Activated T-helper 1 cell treated with anti-CD3 and anti-CD28 coated beads, Interleukin-12 subunit alpha, Interleukin-12 subunit beta, Interleukin-2, Interleukin-4 antibody, amounts not matched to agents 30 ng/mL and 10 ng/mL and 1 ng/mL, durations not matched to agents 14 hours and 24 hours and 36 hours (primary cell): ENCODE measurements at regions of chr22 and their contacts with region 1.

Region 1: DNA sequence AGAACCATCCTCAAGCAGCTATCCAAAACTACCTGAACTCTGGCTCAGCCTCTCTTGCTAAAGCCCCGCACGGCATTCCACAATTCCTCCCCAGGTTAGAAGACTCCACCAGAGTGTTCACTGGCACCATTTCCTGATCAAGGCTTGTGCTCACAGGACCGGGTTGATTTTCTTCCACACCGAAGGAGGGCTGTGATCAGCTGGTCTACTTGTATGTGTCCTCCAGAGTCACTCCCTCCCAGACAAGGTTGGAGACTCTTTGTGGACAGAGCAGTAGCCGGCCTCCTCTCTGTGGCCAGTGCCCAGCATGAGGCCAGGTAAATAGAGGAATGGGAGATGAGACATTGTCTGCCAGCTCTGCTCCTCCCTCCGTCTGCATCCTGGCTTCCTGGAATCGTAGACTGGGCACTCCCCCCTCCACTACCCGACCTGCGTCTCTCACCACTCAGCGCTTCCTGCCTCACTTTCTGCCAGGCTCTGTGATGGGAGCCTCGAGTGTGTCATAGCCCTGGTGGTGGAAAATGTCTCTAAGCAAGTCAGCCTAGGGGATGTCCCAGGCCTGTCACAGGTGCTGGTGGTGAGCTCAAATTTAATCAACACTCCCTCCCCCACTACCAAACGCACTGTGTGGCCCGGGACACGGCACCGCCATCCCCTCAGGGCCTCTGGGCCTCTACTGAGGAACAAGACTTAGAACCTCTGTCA is 12.5 kb upstream of the TMPRSS6 start:
- DNase-seq: peak; percentile 93
- H3K4me3 Mint-ChIP-seq: peak overlapping the region; percentile 86
- H3K27ac Mint-ChIP-seq: peak overlapping the region; percentile 100
- H3K4me1 Mint-ChIP-seq: peaks cover 85% of the 10 kb centered on the region
- H3K27me3 Mint-ChIP-seq: peaks cover 2% of the 10 kb centered on the region

Region 2: GRCh38 chr22:37077884-37078485 is 44.1 kb before region 1 on chr22:
- intact Hi-C with region 1: loop called (anchors 1 kb)
- DNase-seq: peak; percentile 79
- H3K4me3 Mint-ChIP-seq: peak overlapping the region; percentile 49
- H3K27ac Mint-ChIP-seq: peak overlapping the region; percentile 95
- H3K4me1 Mint-ChIP-seq: peaks cover 53% of the 10 kb centered on the region
- H3K27me3 Mint-ChIP-seq: peaks cover 3% of the 10 kb centered on the region

Region 3: DNA sequence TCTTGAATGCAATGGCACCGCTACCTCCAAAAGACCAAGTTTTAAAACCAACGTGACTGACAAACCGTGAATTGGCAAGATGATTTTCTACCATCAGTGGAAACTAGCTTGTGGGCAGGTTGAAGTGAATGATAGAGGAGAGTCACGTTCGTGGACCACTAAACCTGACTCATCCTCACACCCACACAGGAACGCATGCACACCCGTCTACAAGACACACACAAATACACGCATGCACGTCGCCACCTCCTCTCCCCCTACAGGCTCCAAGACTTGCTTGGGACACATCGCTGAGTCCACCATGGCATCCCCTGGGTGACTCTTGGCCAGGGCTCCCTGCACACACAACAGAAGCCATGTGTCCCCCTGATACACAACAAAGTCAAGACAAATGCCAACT is 26.9 kb before region 1 on chr22:
- intact Hi-C with region 1: loop called (anchors 1 kb)
- DNase-seq: no peak
- H3K4me3 Mint-ChIP-seq: no peak overlapping the region
- H3K27ac Mint-ChIP-seq: peak overlapping the region; percentile 80
- H3K4me1 Mint-ChIP-seq: peaks cover 38% of the 10 kb centered on the region
- H3K27me3 Mint-ChIP-seq: peaks cover 3% of the 10 kb centered on the region

Region 4: DNA sequence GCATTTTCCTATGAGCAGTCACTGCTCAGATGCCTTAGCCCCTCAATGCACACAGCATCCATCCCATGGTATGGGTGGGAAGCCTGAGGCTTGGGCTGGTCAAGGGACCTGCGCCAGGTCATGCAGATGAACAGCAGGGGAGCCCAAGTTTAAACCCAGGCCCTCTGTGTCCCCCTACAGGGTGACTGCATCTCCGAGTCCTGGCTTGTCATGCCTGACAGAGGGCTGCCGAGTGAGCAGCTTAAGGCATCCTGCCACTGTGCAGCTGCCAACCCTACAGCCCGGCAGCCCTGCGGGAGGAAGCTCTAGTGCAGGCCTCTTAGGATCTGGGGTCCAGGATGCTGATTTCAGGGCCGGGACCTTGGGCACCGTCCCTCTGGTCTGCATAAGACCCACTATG is 17.7 kb after region 1 on chr22:
- intact Hi-C with region 1: loop called (anchors 2 kb)
- DNase-seq: no peak
- H3K4me3 Mint-ChIP-seq: peak overlapping the region; percentile 9
- H3K27ac Mint-ChIP-seq: peak overlapping the region; percentile 91
- H3K4me1 Mint-ChIP-seq: peaks cover 54% of the 10 kb centered on the region
- H3K27me3 Mint-ChIP-seq: no peaks in the 10 kb centered on the region

Region 5: GRCh38 chr22:37148742-37149665 is 27.0 kb after region 1 on chr22:
- intact Hi-C with region 1: loop called (anchors 1 kb)
- DNase-seq: no peak
- H3K4me3 Mint-ChIP-seq: peak overlapping the region; percentile 92
- H3K27ac Mint-ChIP-seq: peak overlapping the region; percentile 93
- H3K4me1 Mint-ChIP-seq: peaks cover 72% of the 10 kb centered on the region
- H3K27me3 Mint-ChIP-seq: no peaks in the 10 kb centered on the region

Region 6: GRCh38 chr22:37896181-37896592 is 774.1 kb after region 1 on chr22:
- intact Hi-C with region 1: no loop called
- DNase-seq: peak; percentile 52
- H3K4me3 Mint-ChIP-seq: peak overlapping the region; percentile 30
- H3K27ac Mint-ChIP-seq: peak overlapping the region; percentile 89
- H3K4me1 Mint-ChIP-seq: peaks cover 25% of the 10 kb centered on the region
- H3K27me3 Mint-ChIP-seq: no peaks in the 10 kb centered on the region